PC-9 (cell line): ENCODE measurements at regions of chr11 and their contacts with region 1.

Region 1: DNA sequence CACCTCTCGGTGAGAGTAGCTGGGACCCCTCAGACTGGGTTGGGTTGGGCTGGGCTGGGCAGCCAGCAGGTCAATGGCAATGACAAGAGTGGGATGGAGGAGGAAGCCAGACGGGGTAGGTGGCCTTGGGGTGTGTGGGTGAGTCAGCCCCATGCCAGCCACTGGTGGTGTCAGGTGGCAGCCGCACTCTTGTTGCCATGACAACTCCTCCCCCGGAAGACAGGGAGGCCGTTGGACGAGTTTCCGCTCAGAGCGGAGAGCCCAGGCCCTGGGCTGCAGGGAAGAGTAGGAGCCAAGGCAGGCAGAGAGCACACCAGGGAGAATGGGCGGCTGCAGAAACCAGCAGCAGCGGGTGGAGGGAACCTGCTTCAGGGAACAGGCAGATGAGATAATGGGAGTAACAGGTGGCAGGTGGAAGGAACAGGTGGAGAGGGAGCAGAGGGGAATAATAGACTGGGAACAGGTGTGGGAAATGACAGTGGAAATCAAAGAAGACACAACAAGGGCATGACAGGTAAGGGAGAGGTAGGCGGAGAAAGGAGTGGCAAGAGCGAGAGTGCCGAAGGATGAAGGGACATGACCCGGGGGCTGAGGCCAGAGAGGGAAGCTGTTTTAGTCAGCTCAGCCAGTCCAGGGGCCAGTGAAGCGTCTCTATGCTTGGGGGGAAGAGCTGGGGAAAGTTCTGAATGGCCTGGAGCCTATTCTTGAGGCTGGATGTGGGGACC is 8.6 kb downstream of the SPTBN2 start:
- DNase-seq: peak; percentile 97 to 98
- H3K4me3 ChIP-seq: peak overlapping the region; percentile 39; the same call in 1 of the 2 replicates
- H3K27ac ChIP-seq: peak overlapping the region; percentile 59
- H3K4me1 ChIP-seq: peaks cover 61% of the 10 kb centered on the region
- H3K27me3 ChIP-seq: no peaks in the 10 kb centered on the region
- CTCF ChIP-seq: no peak

Region 2: GRCh38 chr11:66651016-66651415 is 69.4 kb before region 1 on chr11:
- CTCF ChIA-PET with region 1: no interaction called
- POLR2A ChIA-PET with region 1: no interaction called
- intact Hi-C with region 1: no loop called
- DNase-seq: no peak
- H3K4me3 ChIP-seq: no peak overlapping the region
- H3K27ac ChIP-seq: no peak overlapping the region
- H3K4me1 ChIP-seq: no peaks in the 10 kb centered on the region
- H3K27me3 ChIP-seq: no peaks in the 10 kb centered on the region
- CTCF ChIP-seq: no peak

Region 3: GRCh38 chr11:66704726-66705360 is 15.5 kb before region 1 on chr11:
- CTCF ChIA-PET with region 1: no interaction called
- POLR2A ChIA-PET with region 1: no interaction called
- intact Hi-C with region 1: loop called (anchors 1 kb)
- DNase-seq: no peak
- H3K4me3 ChIP-seq: no peak overlapping the region
- H3K27ac ChIP-seq: no peak overlapping the region
- H3K4me1 ChIP-seq: peaks cover 11% of the 10 kb centered on the region
- H3K27me3 ChIP-seq: no peaks in the 10 kb centered on the region
- CTCF ChIP-seq: no peak

Region 4: GRCh38 chr11:67167715-67168114 is 447.3 kb after region 1 on chr11:
- CTCF ChIA-PET with region 1: no interaction called
- POLR2A ChIA-PET with region 1: no interaction called
- intact Hi-C with region 1: no loop called
- DNase-seq: peak in 1 of 2 experiments; percentile 61
- H3K4me3 ChIP-seq: no peak overlapping the region
- H3K27ac ChIP-seq: peak overlapping the region; percentile 73
- H3K4me1 ChIP-seq: peaks cover 35% of the 10 kb centered on the region
- H3K27me3 ChIP-seq: no peaks in the 10 kb centered on the region
- CTCF ChIP-seq: no peak